Caco-2 (cell line): ENCODE measurements at regions of chr6 and their contacts with region 1.

Region 1: GRCh38 chr6:68778356-68779020 is 143.4 kb downstream of the ADGRB3 start:
- DNase-seq: peak in 1 of 2 experiments; percentile 27
- H3K4me3 ChIP-seq: no peak overlapping the region
- H3K4me3 Mint-ChIP-seq: no peak overlapping the region
- H3K27ac Mint-ChIP-seq: no peak overlapping the region
- H3K4me1 ChIP-seq: no peaks in the 10 kb centered on the region
- H3K4me1 Mint-ChIP-seq: no peaks in the 10 kb centered on the region
- H3K27me3 ChIP-seq: no peaks in the 10 kb centered on the region
- H3K27me3 Mint-ChIP-seq: peaks cover 3% of the 10 kb centered on the region
- CTCF ChIP-seq: peak; percentile 53 to 59

Region 2: GRCh38 chr6:68572525-68572924 is 206.0 kb before region 1 on chr6:
- CTCF ChIA-PET with region 1: no interaction called
- POLR2A ChIA-PET with region 1: no interaction called
- intact Hi-C with region 1: loop called (anchors 1 kb)
- DNase-seq: peak; percentile 49 to 54
- H3K4me3 ChIP-seq: no peak overlapping the region
- H3K4me3 Mint-ChIP-seq: no peak overlapping the region
- H3K27ac Mint-ChIP-seq: no peak overlapping the region
- H3K4me1 ChIP-seq: no peaks in the 10 kb centered on the region
- H3K4me1 Mint-ChIP-seq: no peaks in the 10 kb centered on the region
- H3K27me3 ChIP-seq: no peaks in the 10 kb centered on the region
- H3K27me3 Mint-ChIP-seq: no peaks in the 10 kb centered on the region
- CTCF ChIP-seq: peak; percentile 41 to 58